ENCODE measurements at regions of chr2 and their contacts with region 1.

Region 1: GRCh38 chr2:68362069-68362468 is 3.0 kb upstream of the PLEK start:
- DNase-seq: peak; percentile 71 to 87 (median 75)
- H3K4me3 ChIP-seq: peak overlapping the region; percentile 33
- H3K4me3 Mint-ChIP-seq: peak overlapping the region; percentile 67 to 93 (median 80)
- H3K27ac ChIP-seq: no peak overlapping the region
- H3K27ac Mint-ChIP-seq: peak overlapping the region; percentile 74 to 98 (median 90)
- H3K4me1 ChIP-seq: peaks cover 21% of the 10 kb centered on the region
- H3K4me1 Mint-ChIP-seq: peaks cover 35 to 45% (median 36%) of the 10 kb centered on the region in 3 donors
- H3K27me3 ChIP-seq: no peaks in the 10 kb centered on the region
- H3K27me3 Mint-ChIP-seq: no peaks in the 10 kb centered on the region

Region 2: GRCh38 chr2:67476809-67477790 is 885.0 kb before region 1 on chr2:
- CTCF ChIA-PET with region 1: no interaction called
- POLR2A ChIA-PET with region 1: no interaction called
- DNase-seq: no peak
- H3K4me3 ChIP-seq: no peak overlapping the region
- H3K4me3 Mint-ChIP-seq: no peak overlapping the region
- H3K27ac ChIP-seq: no peak overlapping the region
- H3K27ac Mint-ChIP-seq: no peak overlapping the region
- H3K4me1 ChIP-seq: no peaks in the 10 kb centered on the region
- H3K4me1 Mint-ChIP-seq: no peaks in the 10 kb centered on the region
- H3K27me3 ChIP-seq: no peaks in the 10 kb centered on the region
- H3K27me3 Mint-ChIP-seq: peaks cover 3 to 11% of the 10 kb centered on the region in 2 donors

Region 3: DNA sequence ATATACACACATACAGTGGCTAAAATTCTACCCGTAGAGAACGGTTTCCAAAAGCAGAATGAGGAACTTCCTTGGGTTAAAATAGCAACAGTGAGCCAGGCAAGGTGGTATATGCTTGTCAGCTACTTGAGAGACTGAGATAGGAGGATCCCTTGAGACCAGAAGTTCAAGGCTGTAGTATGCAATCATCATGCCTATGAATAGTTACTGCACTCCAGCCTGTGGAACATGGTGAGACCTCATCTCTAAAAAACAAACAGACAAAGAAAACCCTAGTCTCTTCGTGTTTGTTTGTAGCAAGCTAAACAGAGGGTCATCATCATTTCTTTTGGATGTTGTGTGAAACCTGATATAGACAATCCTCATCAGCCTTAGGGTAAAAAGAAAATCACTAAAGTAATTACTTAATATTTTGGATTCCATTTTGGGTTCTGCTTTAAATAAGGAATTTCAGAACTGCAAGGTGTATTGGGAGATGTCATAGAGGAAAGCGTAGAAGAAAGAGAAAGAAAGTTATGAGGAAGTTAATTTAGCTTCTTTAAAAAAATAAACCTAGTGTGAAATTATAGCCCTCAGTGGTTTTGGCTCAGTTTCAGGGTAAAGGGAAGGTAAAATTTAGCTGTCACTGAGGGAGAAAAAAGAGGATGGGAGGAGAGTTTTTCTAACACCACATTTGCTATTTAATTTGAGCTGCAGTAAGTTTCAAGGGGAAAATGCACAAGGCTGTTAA is 49.5 kb after region 1 on chr2:
- CTCF ChIA-PET with region 1: interaction called, 3 read pairs
- POLR2A ChIA-PET with region 1: interaction called, 10 read pairs
- DNase-seq: peak in 1 of 5 donors; percentile 6
- H3K4me3 ChIP-seq: no peak overlapping the region
- H3K4me3 Mint-ChIP-seq: peak overlapping the region; percentile 7 to 66 (median 60)
- H3K27ac ChIP-seq: no peak overlapping the region
- H3K27ac Mint-ChIP-seq: peak overlapping the region; percentile 13 to 81 (median 66)
- H3K4me1 ChIP-seq: peaks cover 29% of the 10 kb centered on the region
- H3K4me1 Mint-ChIP-seq: peaks cover 37 to 77% (median 73%) of the 10 kb centered on the region in 3 donors
- H3K27me3 ChIP-seq: no peaks in the 10 kb centered on the region
- H3K27me3 Mint-ChIP-seq: no peaks in the 10 kb centered on the region

Measured in CD8-positive, alpha-beta memory T cell (primary cell).